Activated CD8-positive, alpha-beta T cell treated with anti-CD3 and anti-CD28 coated beads for 36 hours (primary cell): ENCODE measurements at regions of chr1 and their contacts with region 1.

Region 1: DNA sequence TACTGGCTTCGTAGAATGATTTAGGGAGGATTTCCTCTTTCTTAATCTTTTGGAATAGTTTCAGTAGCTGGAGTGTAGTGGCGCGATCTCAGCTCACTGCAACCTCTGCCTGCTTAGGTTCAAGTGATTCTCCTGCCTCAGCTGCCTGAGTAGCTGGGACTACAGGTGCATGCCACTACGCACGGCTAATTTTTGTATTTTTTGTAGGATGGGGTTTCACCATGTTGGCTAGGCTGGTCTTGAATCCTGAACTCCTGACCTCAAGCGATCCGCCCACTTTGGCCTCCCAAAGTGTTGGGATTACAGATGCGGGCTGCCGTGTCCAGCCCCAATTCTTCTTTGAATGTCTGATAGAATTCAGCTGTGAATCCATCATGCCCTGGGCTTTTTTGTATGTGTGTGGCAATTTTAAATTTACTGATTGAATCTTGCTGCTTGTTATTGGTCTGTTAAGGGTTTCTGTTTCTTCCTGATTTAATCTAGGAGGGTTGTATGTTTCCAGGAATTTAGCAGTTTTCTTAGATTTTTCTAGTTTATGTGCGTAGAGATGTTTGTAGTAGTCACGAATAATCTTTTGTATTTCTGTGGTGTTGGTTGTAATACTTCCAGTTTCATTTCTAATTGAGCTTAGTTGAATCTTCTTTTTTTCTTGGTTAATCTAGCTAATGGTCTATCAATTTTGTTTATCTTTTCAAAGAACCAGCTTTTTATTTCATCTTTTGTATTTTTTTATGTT is 15.3 kb downstream of the MAN1C1 start:
- DNase-seq: peak; percentile 27
- ATAC-seq: peak; percentile 71
- H3K4me3 Mint-ChIP-seq: peak overlapping the region; percentile 77
- H3K27ac Mint-ChIP-seq: peak overlapping the region; percentile 87
- H3K4me1 Mint-ChIP-seq: peaks cover 64% of the 10 kb centered on the region
- H3K27me3 Mint-ChIP-seq: no peaks in the 10 kb centered on the region
- CTCF ChIP-seq: no peak

Region 2: GRCh38 chr1:25642574-25643108 is 10.7 kb after region 1 on chr1:
- CTCF ChIA-PET with region 1: interaction called, 22 read pairs
- POLR2A ChIA-PET with region 1: interaction called, 7 read pairs
- intact Hi-C with region 1: no loop called
- DNase-seq: peak; percentile 90
- ATAC-seq: peak; percentile 91
- H3K4me3 Mint-ChIP-seq: peak overlapping the region; percentile 40
- H3K27ac Mint-ChIP-seq: peak overlapping the region; percentile 62
- H3K4me1 Mint-ChIP-seq: peaks cover 57% of the 10 kb centered on the region
- H3K27me3 Mint-ChIP-seq: peaks cover 8% of the 10 kb centered on the region
- CTCF ChIP-seq: no peak